ENCODE measurements at regions of chr12 and their contacts with region 1.

Region 1: GRCh38 chr12:27319409-27319808 is 13.2 kb upstream of the BMAL2 start:
- DNase-seq: no peak
- ATAC-seq: no peak
- H3K4me3 ChIP-seq: no peak overlapping the region
- H3K4me1 ChIP-seq: no peaks in the 10 kb centered on the region
- CTCF ChIP-seq: no peak

Region 2: DNA sequence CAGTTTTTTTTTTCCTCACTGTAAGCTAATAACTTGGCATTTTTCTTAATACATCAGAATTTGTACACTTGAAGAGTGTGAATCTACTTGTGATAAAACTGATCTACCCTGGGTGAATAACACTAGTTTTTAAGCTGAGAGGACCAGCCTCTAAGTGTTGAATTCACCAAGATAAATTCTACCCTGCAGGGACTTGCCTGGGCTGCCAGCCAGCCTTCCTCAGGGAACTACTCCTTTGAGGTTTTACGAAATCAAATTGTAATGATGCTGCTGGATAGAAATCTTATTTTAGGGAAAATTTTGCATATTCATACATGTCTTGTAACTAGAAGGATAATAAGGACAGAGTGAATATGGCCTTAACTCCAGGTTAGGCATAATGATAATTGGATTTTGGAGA is 295.1 kb before region 1 on chr12:
- intact Hi-C with region 1: loop called in 1 of 2 experiments (anchors 10 kb)
- DNase-seq: no peak
- ATAC-seq: no peak
- H3K4me3 ChIP-seq: no peak overlapping the region
- H3K4me1 ChIP-seq: peaks cover 9% of the 10 kb centered on the region
- CTCF ChIP-seq: no peak

Region 3: GRCh38 chr12:27161458-27162228 is 157.8 kb before region 1 on chr12:
- intact Hi-C with region 1: no loop called
- DNase-seq: no peak
- ATAC-seq: peak; percentile 57
- H3K4me3 ChIP-seq: no peak overlapping the region
- H3K4me1 ChIP-seq: no peaks in the 10 kb centered on the region
- CTCF ChIP-seq: no peak

Region 4: DNA sequence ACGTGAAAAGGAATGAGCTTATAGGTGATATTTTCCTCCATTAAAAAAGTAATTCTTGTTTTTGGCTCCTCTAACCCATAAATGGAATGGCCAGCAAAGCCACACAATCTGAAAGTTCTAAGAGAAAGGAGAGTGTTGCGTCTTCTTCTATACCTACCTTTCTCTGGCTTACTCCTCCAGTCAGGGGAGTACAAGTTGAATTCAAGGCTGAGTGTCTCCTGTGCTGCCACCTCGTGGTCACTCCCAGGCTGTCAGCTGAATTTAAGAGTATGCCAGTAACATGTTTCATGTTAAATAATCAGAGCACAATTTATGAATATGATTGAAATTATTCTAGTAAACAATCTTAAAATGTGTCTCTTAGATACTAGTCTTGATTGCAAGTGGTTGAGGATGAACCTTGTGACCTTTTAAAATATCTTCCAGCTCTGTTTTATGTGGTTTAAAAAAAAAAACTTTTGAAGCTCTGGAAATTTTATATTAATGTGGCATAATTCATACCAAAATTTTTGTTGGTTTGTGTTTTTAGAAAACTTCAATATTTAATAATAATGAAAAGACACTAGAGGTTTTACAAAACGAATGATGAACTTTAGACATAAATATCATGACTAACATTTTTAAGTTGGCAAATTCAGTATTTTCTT is 621.5 kb after region 1 on chr12:
- intact Hi-C with region 1: no loop called
- DNase-seq: peak in 2 of 3 donors; percentile 79 to 89
- ATAC-seq: peak; percentile 83
- H3K4me3 ChIP-seq: no peak overlapping the region
- H3K4me1 ChIP-seq: no peaks in the 10 kb centered on the region
- CTCF ChIP-seq: peak; percentile 70